ENCODE measurements at regions of chr5 and their contacts with region 1.

Region 1: GRCh38 chr5:10724799-10725507 is 36.1 kb downstream of the DAP start:
- DNase-seq: peak; percentile 97
- H3K4me3 ChIP-seq: peak overlapping the region in 1 of 3 experiments; percentile 21
- H3K27ac ChIP-seq: peak overlapping the region; percentile 81
- H3K4me1 ChIP-seq: peaks cover 53% of the 10 kb centered on the region
- H3K27me3 ChIP-seq: no peaks in the 10 kb centered on the region
- CTCF ChIP-seq: peak; percentile 60 to 81
- POLR2A ChIP-seq: peak; percentile 47

Region 2: GRCh38 chr5:10162468-10162867 is 562.5 kb before region 1 on chr5:
- CTCF ChIA-PET with region 1: no interaction called
- POLR2A ChIA-PET with region 1: no interaction called
- dilution Hi-C with region 1: no loop called
- intact Hi-C with region 1: no loop called
- DNase-seq: no peak
- H3K4me3 ChIP-seq: no peak overlapping the region
- H3K27ac ChIP-seq: no peak overlapping the region
- H3K4me1 ChIP-seq: no peaks in the 10 kb centered on the region
- H3K27me3 ChIP-seq: no peaks in the 10 kb centered on the region
- CTCF ChIP-seq: no peak
- POLR2A ChIP-seq: no peak

Region 3: DNA sequence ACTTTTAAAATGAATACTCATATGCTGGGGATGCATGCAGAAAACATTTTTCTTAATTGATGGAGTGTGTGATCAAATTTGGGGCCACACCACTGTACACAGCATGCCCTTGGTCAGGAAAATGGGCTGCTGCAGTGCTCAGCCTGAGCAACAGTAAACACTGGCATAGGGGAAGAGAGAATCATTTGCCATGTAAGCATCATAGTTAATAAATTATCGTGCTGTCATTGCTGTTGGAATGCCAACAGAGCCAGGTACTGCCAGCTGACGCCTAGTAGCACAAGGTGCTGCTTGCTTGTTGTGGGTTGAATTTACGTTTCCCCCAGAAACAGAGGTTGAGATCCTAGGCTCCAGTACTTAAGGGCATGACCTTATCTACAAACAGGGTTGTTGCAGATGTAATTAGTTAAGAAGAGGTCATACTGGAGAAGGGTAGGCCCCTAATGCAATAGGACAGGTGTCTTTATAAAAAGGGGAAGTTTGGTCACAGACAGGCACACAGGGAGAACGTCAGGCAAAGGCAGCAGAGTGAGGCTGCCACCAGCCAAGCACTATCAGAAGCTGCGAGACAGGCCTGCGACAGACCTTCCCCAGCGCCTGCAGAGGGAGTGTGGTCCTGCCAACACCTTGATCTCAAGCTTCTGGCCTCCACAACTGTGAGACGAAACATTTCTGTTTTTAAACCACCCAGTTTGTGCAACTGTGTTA is 10.8 kb after region 1 on chr5:
- CTCF ChIA-PET with region 1: interaction called, 9 read pairs
- POLR2A ChIA-PET with region 1: interaction called, 4 read pairs
- dilution Hi-C with region 1: no loop called
- intact Hi-C with region 1: loop called (anchors 1 kb)
- DNase-seq: no peak
- H3K4me3 ChIP-seq: no peak overlapping the region
- H3K27ac ChIP-seq: no peak overlapping the region
- H3K4me1 ChIP-seq: peaks cover 29% of the 10 kb centered on the region
- H3K27me3 ChIP-seq: no peaks in the 10 kb centered on the region
- CTCF ChIP-seq: no peak
- POLR2A ChIP-seq: no peak